ENCODE measurements at regions of chr20 and their contacts with region 1.

Region 1: GRCh38 chr20:64079273-64080012 is at the start of gene RGS19:
- DNase-seq: peak; percentile 96
- H3K4me3 ChIP-seq: peak within 1 kb of the TSS; percentile 76 to 80
- H3K27ac ChIP-seq: peak within 1 kb of the TSS in 1 of 2 experiments; percentile 68; a peak in 2 of 4 replicates
- H3K4me1 ChIP-seq: peaks cover 13 to 34% of the 10 kb centered on the region in 2 experiments; a peak in 3 of 4 replicates
- H3K27me3 ChIP-seq: no peaks in the 10 kb centered on the region
- CTCF ChIP-seq: no peak
- EP300 ChIP-seq: no peak
- RAD21 ChIP-seq: no peak
- polyA plus RNA-seq, gene RGS19: 18.7 and 20.5 TPM in 2 replicates

Region 2: DNA sequence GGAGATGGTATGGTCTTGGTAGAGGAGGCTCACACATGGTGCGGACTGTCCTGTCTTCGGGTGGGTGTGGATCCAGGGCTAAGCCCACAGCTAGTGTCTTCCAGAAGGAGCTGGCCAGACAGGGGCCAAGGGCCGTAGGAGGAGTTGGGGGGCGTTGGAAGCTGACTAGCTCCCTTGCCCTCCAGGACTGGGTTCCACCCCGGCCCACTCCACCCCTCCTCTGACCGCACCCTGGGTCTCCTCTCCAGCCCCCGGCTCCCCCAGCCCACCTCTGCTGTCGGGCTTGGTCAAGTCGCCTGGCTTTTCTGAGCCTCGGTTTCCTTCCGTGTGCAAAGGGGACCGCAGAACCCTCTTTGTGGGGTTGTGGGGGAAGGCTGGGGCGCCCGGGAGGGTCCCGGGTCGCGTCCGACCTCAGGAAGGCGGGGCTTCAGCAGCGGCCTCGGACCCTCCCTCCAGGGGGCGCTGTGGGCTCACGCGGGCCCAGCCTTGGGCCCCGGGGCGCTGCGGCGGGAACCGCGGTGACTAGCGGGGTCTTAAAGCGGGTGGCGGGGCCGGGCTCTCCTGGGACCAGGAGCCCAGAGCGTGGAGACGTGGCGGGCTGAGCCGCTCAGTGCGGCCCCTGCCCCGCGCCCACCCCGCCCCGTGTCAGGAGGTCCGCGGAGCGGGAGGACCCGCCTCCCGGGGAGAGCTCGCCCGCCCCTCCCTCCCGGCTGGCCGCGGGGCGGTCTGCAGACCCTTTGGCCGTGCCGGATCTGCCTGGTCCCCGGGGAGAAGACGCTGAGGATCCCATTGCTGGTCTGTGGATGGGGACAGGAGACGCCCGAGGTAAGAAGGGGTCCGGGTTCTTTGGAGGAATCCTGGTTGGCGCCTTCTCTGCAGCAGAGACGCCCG is 22.5 kb after region 1 on chr20:
- CTCF ChIA-PET with region 1: interaction called, 16 read pairs
- POLR2A ChIA-PET with region 1: no interaction called
- DNase-seq: peak; percentile 94
- H3K4me3 ChIP-seq: peak overlapping the region; percentile 27 to 46
- H3K27ac ChIP-seq: no peak overlapping the region
- H3K4me1 ChIP-seq: peaks cover 0 to 2% of the 10 kb centered on the region in 2 experiments; a peak in 1 of 4 replicates
- H3K27me3 ChIP-seq: no peaks in the 10 kb centered on the region; the same call in 1 of the 2 replicates
- CTCF ChIP-seq: peak; percentile 61
- EP300 ChIP-seq: no peak
- RAD21 ChIP-seq: peak; percentile 51

Region 3: GRCh38 chr20:64106981-64107735 is 27.7 kb after region 1 on chr20 and contains the start of gene NPBWR2:
- CTCF ChIA-PET with region 1: interaction called, 252 read pairs
- POLR2A ChIA-PET with region 1: no interaction called
- DNase-seq: no peak
- H3K4me3 ChIP-seq: no peak within 1 kb of the TSS
- H3K27ac ChIP-seq: no peak within 1 kb of the TSS
- H3K4me1 ChIP-seq: peaks cover 0 to 18% of the 10 kb centered on the region in 2 experiments; a peak in 1 of 4 replicates
- H3K27me3 ChIP-seq: no peaks in the 10 kb centered on the region; the same call in 1 of the 2 replicates
- CTCF ChIP-seq: no peak
- EP300 ChIP-seq: no peak
- RAD21 ChIP-seq: no peak
- polyA plus RNA-seq, gene NPBWR2: not detected in 2 replicates

Measured in SK-N-SH (cell line).